WTC11 (cell line): ENCODE measurements at regions of chr2 and their contacts with region 1.

Region 1: DNA sequence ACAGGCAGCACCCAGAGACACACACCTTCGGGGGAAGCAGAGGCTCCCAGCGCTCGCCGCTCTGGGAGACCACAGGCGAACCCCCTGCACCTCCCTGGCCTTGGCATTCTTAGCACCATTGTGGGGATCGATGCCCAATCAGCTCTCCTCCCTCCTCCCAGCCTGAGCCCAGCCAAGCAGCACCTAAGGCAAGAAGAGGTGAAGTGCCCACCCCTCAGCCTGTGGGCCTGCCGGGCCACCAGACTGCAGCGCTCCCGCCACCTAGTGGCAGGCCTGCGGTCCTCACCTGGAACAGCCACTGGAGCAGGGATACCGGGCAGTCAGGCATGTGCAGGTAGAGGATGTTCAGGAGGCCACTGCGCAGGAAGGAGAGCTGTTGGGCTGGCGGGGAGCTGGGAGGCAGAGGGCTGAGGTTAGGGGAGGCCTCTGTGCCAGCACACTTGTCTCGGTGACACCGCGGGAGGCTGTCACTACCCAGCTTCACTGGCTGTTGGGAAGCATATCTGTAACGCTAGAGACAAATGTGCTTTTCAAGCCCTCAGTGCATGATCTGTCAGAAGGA is 35.2 kb downstream of the FAM178B start:
- DNase-seq: peak; percentile 91
- ATAC-seq: peak; percentile 96
- H3K4me3 Mint-ChIP-seq: no peak overlapping the region
- H3K27ac Mint-ChIP-seq: no peak overlapping the region
- H3K4me1 Mint-ChIP-seq: peaks cover 11% of the 10 kb centered on the region
- H3K27me3 Mint-ChIP-seq: peaks cover 3% of the 10 kb centered on the region; the same call in 1 of the 2 replicates
- CTCF ChIP-seq: peak; percentile 93

Region 2: DNA sequence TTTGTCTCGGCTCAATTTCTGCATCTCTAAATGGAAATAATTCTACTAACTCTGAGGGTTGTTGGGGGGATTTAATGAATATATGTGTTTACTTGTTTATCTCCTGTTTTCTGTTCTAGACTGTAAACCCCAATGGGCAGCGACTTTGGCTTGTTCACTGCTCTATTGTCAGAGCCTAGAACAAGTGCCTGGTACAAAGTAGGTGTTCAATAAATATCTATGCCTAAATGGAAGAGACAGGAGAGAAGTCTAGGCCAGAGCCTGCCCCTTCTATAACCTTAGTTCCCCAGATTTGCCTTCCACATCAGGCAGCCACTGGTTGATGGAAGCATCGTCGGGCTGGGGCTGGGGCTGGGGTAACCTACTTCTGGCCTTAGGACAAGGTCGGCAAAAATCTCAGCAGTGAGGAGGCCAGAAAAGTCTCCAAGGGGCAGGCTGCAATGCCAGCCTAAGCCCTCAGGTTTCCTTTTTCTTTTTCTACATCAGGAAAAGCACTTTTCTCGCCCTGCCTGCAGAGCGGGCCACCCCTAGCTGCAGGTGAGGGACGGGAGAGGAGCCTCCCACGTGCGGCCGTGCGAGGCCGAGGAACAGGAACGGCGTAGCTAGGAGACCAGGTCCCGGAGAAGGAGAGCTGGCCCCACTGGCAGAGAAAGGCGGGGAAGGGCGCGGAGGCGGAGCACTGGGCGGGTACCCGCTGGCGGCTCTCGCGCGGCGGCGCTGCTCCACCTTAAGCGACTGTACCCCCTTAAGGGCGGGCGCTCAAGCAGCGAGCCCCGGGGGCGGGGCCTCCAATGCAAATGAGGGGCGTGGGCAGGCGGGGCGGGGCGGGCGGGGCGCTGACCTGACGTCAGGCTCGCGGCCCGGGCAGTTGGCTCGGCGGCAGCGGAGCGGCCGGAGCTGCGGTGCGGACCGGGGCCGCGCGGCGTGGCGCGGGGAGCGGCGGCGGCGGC is 190.9 kb before region 1 on chr2 and contains the start of gene CNNM4:
- CTCF ChIA-PET with region 1: interaction called, 13 read pairs
- POLR2A ChIA-PET with region 1: no interaction called
- DNase-seq: peak; percentile 96
- ATAC-seq: peak; percentile 85
- H3K4me3 Mint-ChIP-seq: peak within 1 kb of the TSS; percentile 67
- H3K27ac Mint-ChIP-seq: peak within 1 kb of the TSS; percentile 91
- H3K4me1 Mint-ChIP-seq: peaks cover 51% of the 10 kb centered on the region
- H3K27me3 Mint-ChIP-seq: peaks cover 16% of the 10 kb centered on the region
- CTCF ChIP-seq: no peak
- total RNA-seq, gene CNNM4: 13.9 to 14.3 TPM (median 14.0 TPM) in 3 replicates

Region 3: DNA sequence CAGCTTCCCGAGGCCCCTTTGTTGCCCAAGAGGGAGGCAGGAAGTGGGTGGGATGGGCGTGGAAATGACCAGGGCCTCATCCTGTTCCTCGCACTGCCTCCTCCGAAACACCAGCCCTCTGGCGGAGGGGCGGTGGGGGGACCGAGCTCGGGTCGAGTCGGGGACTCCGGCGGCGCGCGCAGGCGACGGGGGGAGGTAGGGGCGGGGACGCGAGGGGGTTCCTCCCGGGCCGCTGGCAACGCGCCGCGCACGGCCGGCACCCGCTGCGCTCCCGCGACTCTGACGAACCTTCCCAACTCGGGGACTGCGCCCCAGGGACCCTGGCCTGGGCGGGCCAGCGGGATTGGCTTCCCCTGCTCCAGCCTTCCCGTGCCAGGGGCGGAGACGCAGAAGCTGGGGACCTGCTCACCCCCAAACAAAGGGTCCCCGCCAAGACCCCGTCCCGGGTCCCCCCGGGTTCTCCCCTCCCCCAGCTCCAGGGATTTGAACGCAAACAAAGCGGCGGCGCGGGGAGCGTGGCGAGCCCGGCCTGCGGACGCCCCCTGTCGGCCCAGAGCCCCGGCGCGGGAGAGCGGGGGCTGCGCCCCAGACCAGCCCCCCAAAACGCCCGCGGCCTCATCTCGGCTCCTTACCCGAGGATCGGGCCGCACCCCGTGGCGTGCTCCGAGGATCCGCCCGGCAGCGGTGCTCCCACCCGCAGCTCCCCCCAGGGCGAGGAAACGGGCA is 82.5 kb before region 1 on chr2:
- CTCF ChIA-PET with region 1: interaction called, 43 read pairs
- POLR2A ChIA-PET with region 1: no interaction called
- DNase-seq: peak; percentile 74
- ATAC-seq: peak; percentile 61
- H3K4me3 Mint-ChIP-seq: peak overlapping the region; percentile 82
- H3K27ac Mint-ChIP-seq: no peak overlapping the region
- H3K4me1 Mint-ChIP-seq: peaks cover 37% of the 10 kb centered on the region
- H3K27me3 Mint-ChIP-seq: 0 out of 2 replicates have a peak, but pooled peaks cover 4% of the 10 kb centered on the region
- CTCF ChIP-seq: peak; percentile 45; the same call in 1 of the 2 replicates

Region 4: GRCh38 chr2:96891491-96892333 is 59.5 kb before region 1 on chr2:
- CTCF ChIA-PET with region 1: interaction called, 17 read pairs
- POLR2A ChIA-PET with region 1: no interaction called
- DNase-seq: no peak
- ATAC-seq: peak; percentile 77
- H3K4me3 Mint-ChIP-seq: no peak overlapping the region
- H3K27ac Mint-ChIP-seq: peak overlapping the region; percentile 40; the same call in 1 of the 2 replicates
- H3K4me1 Mint-ChIP-seq: peaks cover 51% of the 10 kb centered on the region
- H3K27me3 Mint-ChIP-seq: no peaks in the 10 kb centered on the region; the same call in 1 of the 2 replicates
- CTCF ChIP-seq: no peak

Region 5: DNA sequence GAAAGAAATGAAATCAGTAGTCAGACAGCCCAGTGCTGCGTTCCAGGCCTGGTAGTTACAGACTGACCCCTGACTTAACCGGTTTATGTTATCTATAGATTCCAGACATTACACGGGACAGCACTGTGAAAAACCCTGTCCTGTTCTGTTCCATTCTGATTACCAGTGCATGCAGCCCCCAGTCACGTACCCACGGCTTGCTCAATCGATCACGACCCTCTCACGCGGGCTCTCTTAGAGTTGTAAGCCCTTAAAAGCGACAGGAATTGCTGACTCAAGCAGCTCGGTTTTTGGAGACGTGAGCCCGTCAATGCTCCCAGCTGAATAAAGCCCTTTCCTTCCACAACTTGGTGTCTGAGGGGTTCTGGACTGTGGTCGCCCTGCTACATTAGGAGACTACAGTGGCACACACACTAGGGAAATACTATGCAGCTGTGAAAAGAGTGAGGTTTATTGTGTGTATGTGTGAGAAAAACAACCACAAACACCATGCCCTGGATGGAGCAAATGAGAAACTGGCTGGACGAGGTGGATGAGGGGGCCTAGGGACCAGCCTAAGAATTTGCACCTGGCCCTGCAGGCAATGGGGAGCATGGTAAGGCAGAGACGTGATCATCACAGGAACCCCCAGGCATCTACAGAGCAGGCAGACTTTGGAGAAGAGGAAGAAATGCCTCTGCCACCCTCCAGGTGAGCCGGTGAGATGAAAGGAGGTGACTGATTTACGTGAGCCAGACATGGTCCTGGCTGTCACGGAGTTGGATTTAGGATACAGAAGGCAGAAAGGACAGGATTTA is 32.2 kb before region 1 on chr2:
- CTCF ChIA-PET with region 1: interaction called, 15 read pairs
- POLR2A ChIA-PET with region 1: no interaction called
- DNase-seq: no peak
- ATAC-seq: no peak
- H3K4me3 Mint-ChIP-seq: no peak overlapping the region
- H3K27ac Mint-ChIP-seq: no peak overlapping the region
- H3K4me1 Mint-ChIP-seq: peaks cover 52% of the 10 kb centered on the region
- H3K27me3 Mint-ChIP-seq: peaks cover 71% of the 10 kb centered on the region
- CTCF ChIP-seq: no peak

Region 6: DNA sequence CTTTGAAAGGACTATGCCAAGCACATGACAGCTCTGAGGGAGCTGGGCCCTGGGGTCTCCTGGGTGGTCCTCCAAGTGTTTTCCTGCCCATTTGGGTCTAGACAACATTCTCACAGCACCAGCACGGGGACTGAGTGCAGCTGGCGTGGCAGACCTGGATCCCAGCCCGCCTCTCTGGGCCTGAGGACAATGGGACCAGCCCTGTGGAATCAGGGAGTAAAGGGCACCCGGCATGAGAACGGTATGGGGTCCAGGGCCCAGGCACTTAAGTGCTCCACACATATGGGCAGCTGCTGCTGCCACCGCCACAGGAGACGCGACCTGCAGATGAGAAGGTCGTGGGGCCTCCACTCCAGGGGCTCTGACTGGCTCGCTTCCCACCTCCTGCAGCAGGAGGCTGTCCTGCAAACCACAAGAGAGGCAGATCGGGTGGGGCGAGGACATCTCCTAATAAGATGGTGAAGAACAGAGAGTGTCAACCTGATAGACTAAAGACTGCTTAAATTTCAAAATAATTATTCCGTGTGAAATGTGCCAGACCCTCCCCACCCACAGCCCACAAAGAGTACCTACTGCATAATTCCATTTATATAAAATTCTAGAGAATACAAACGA is 11.1 kb before region 1 on chr2:
- CTCF ChIA-PET with region 1: interaction called, 25 read pairs
- POLR2A ChIA-PET with region 1: no interaction called
- DNase-seq: no peak
- ATAC-seq: no peak
- H3K4me3 Mint-ChIP-seq: no peak overlapping the region
- H3K27ac Mint-ChIP-seq: no peak overlapping the region
- H3K4me1 Mint-ChIP-seq: peaks cover 4% of the 10 kb centered on the region
- H3K27me3 Mint-ChIP-seq: no peaks in the 10 kb centered on the region
- CTCF ChIP-seq: no peak